HAP-1 (cell line): ENCODE measurements at regions of chr22 and their contacts with region 1.

Region 1: DNA sequence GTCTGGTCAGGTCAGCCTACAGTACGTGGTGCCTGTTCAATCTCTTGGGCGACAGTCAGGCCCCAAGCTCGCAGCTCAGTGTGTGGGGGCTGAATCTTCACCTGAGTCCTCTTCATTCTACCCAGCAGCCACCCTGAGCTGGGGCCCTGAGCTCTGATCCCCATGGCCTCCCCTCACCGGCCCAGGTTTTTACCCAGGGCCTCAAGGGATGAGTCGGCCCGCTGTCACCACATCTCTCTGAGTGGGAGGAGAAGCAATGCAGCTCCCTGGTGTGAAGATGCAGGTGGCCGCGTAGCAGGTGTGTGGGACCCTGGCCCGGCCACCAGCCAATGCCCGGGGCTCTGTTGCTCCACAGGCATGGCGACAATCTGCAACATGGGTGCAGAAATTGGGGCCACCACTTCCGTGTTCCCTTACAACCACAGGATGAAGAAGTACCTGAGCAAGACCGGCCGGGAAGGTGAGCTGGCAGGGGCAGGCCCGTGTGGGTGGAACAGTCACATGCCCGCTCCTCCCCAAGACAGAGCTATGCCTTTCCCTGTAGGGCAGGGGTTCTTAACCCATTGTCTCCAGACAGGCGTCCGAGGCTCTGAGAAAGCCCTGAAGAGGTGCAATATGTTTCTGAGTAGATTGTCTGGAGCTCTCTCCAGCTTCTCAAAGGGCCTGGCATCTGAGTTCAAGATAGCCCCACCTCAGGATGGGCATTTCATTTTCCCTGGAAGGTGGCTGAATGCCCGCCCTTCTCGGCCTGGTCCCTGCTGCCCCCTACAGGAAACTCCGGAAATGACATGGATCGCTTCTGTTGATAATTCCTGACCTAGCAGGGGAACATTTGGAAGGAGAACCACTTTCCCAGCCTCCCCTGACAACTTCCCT is 26.9 kb downstream of the POLR3H start:
- DNase-seq: peak; percentile 39 to 84
- H3K4me3 ChIP-seq: no peak overlapping the region
- H3K4me1 ChIP-seq: peaks cover 2% of the 10 kb centered on the region; the same call in 1 of the 2 replicates
- H3K27me3 ChIP-seq: no peaks in the 10 kb centered on the region

Region 2: DNA sequence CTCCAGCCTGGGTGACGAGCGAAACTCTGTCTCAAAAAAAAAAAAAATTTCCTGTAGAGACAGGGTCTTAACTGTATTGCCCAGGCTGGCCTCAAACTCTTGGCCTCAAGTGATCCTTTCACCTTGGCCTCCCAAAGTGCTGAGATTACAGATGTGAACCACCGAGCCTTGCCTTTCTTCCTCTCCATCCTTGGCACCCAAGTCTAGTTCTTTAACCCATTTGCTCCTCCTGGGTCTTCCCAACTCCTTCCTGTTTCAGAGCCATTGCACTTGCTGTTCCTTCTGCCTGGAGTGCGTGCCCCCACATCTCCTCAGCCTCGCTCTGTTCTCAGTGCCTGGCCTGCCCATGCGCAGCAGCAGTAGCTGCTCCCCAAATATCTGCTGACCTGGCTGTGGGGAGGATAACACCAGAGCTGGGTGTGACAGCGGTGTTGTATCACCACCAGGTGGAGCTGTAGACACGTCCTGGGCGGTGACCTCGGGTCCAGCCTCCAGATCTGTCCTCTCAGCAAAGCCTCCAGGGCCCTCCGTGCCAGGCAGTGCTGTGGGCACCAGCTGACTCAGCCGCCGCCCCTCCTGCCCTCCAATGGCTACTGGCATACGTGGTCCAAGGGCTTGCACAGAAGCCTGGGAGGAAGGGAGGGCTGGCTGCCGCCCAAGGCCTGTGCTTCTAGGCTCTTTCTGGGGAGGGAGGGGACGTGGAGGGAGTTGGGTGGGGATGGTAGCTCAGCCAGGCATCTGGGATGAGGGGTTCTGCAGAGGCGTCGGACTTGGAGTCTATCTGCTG is 113.7 kb before region 1 on chr22:
- in situ Hi-C with region 1: loop called (anchors 5 kb)
- DNase-seq: peak; percentile 65 to 88
- H3K4me3 ChIP-seq: no peak overlapping the region
- H3K4me1 ChIP-seq: no peaks in the 10 kb centered on the region
- H3K27me3 ChIP-seq: no peaks in the 10 kb centered on the region

Region 3: DNA sequence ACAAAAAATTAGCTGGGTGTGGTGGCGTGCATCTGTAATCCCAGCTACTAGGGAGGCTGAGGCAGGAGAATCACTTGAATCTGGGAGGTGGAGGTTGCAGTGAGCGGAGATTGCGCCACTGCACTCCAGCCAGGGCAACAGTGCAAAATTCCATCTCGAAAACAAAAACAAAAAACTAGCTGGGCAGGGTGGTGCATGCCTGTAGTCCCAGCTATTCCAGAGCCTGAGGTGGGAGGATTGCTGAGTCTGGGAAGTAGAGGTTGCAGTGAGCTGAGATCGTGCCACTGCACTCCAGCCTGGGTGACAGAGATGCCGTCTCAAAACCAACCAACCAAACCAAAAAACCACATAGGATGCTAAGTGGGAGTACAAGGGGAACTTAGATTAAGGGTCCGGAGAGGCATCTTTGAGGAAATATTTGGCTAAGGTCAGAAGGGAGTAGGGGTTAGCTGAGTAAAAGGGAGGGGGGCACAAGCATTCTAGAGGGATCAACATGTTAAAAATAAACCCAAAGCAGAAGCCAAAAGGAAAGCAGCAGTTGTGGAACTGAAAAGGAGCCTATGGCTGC is 59.2 kb before region 1 on chr22:
- in situ Hi-C with region 1: no loop called
- DNase-seq: no peak
- H3K4me3 ChIP-seq: no peak overlapping the region
- H3K4me1 ChIP-seq: no peaks in the 10 kb centered on the region
- H3K27me3 ChIP-seq: no peaks in the 10 kb centered on the region

Region 4: GRCh38 chr22:42283278-42284201 is 766.1 kb after region 1 on chr22:
- in situ Hi-C with region 1: no loop called
- DNase-seq: peak in 1 of 2 experiments; percentile 43
- H3K4me3 ChIP-seq: no peak overlapping the region
- H3K4me1 ChIP-seq: peaks cover 8% of the 10 kb centered on the region
- H3K27me3 ChIP-seq: no peaks in the 10 kb centered on the region